Gastrocnemius medialis (tissue), 4 donors: ENCODE measurements at regions of chr6 and their contacts with region 1.

Region 1: GRCh38 chr6:24666641-24667377 is at the starts of genes ACOT13 and TDP2:
- DNase-seq: peak; percentile 89 to 95
- ATAC-seq: peak; percentile 91 to 94
- H3K4me3 ChIP-seq: peak within 1 kb of the TSS; percentile 76 to 95 (median 94)
- H3K27ac ChIP-seq: peak within 1 kb of the TSS; percentile 90 to 95 (median 92)
- H3K4me1 ChIP-seq: peaks cover 31 to 32% of the 10 kb centered on the region in 2 donors
- H3K27me3 ChIP-seq: no peaks in the 10 kb centered on the region
- CTCF ChIP-seq: peak; percentile 57 to 73 (median 61)
- POLR2A ChIP-seq: peak; percentile 73 to 81
- total RNA-seq, gene ACOT13: 13.6 to 28.2 (median 21.1) TPM
- total RNA-seq, gene TDP2: 17.6 to 44.2 (median 21.7) TPM

Region 2: GRCh38 chr6:24710519-24711303 is 43.9 kb after region 1 on chr6:
- in situ Hi-C with region 1: loop called in 1 of 4 experiments (anchors 5 kb)
- intact Hi-C with region 1: no loop called
- DNase-seq: no peak
- ATAC-seq: no peak
- H3K4me3 ChIP-seq: no peak overlapping the region
- H3K27ac ChIP-seq: peak overlapping the region in 1 of 4 donors; percentile 33
- H3K4me1 ChIP-seq: peaks cover 22 to 30% of the 10 kb centered on the region in 2 donors
- H3K27me3 ChIP-seq: no peaks in the 10 kb centered on the region
- CTCF ChIP-seq: no peak
- POLR2A ChIP-seq: no peak

Region 3: DNA sequence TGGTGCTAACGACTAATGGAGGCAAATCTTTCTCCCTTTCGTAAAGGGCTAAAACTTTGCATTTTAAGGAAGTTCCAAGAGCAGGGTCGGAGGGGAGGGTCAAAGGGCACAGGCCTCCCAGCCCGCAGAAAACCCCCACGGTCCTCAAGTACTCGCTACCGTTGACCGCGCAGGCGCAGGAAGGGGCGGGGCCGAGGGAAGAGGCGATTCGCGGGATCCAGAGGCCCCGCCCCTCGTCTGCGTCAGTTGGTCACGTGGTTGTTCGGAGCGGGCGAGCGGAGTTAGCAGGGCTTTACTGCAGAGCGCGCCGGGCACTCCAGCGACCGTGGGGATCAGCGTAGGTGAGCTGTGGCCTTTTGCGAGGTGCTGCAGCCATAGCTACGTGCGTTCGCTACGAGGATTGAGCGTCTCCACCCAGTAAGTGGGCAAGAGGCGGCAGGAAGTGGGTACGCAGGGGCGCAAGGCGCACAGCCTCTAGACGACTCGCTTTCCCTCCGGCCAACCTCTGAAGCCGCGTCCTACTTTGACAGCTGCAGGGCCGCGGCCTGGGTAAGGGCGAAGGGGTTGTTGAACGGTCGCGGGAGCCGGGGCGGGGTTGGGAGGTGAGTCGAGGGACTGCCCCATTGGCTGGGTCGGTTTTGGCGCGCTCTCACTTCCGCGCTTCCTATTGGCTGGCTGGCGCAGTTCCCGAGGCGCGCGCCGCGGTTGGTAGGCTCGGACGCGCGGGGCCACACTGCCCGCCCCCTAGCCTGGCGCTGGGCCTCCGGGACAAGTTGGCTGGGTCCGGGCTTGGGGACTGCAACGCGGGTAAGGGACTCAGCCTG is 108.1 kb after region 1 on chr6 and contains the start of gene GMNN:
- in situ Hi-C with region 1: no loop called
- intact Hi-C with region 1: loop called (anchors 1 kb)
- DNase-seq: peak; percentile 94 to 95
- ATAC-seq: peak; percentile 96 to 98
- H3K4me3 ChIP-seq: peak within 1 kb of the TSS; percentile 90 to 100 (median 95)
- H3K27ac ChIP-seq: peak within 1 kb of the TSS; percentile 95 to 100 (median 98)
- H3K4me1 ChIP-seq: peaks cover 11 to 15% of the 10 kb centered on the region in 2 donors
- H3K27me3 ChIP-seq: no peaks in the 10 kb centered on the region
- CTCF ChIP-seq: no peak
- POLR2A ChIP-seq: peak; percentile 59 to 62
- total RNA-seq, gene GMNN: 2.6 to 4.4 (median 3.3) TPM